Left colon (tissue), 2 donors: ENCODE measurements at regions of chr5 and their contacts with region 1.

Region 1: DNA sequence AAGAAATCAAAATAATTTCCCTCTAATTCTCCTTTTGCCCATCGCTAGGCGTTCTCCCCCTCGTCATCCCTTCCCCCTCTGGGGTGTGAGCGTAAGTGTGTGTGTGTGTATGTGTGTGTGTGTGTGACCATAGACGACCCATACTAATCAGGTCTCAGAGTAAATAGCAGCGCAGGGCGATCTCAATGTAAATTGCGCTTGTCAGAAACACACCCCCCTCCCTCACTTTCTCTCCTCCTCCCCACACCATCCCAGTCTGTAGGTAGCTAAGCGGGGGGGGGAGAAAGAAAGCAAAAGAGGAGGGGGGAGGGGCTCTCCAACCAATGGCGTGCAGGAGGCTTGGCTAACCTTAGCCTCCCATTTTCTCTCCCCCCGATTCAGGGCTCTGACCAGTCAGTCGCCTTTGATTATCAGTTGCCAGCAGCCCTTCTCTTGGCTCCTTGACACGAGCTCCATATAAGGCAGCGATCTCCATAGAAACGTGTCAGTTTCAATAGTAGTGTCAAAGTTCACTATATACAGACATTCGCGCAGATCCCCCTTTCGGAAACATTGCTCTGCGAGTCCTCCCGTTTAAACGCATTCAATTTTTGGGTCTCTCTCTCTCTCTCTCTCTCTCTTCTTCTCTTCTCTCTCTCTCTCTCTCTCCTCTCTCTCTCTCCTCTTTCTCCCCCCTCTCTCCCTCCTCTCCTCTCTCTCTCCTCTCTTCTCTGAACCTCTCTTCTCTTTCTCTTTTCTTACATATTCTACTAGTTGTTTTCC is at the start of gene NR2F1:
- DNase-seq: peak; percentile 47 to 54
- ATAC-seq: peak; percentile 39
- total RNA-seq, gene NR2F1: 2.7 to 4.9 TPM

Region 2: DNA sequence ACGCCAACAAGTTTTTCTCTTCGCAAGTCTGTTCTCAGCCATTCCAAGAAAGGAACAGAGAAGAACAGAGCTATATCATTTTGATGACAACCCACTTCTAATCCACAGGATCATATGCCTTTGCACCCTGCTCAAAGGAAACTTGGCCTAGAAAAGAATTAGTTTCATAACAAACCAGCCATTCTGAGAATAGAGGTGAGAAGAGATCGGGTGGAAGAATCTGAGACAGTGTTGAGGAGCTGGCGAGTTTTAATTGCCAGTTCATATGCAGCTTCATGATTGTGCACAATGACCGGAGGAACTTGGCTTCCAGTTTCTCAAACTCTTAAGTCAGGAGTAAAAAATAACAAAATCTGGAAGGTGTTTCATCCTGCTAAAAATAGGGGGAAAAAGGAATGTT is 381.8 kb before region 1 on chr5:
- intact Hi-C with region 1: no loop called
- DNase-seq: no peak
- ATAC-seq: no peak

Region 3: GRCh38 chr5:93512799-93513198 is 70.1 kb before region 1 on chr5:
- intact Hi-C with region 1: no loop called
- DNase-seq: no peak
- ATAC-seq: no peak

Region 4: GRCh38 chr5:93635991-93636390 is 53.1 kb after region 1 on chr5:
- intact Hi-C with region 1: no loop called
- DNase-seq: no peak
- ATAC-seq: no peak

Region 5: GRCh38 chr5:93915142-93915553 is 332.3 kb after region 1 on chr5:
- intact Hi-C with region 1: loop called in 1 of 2 experiments (anchors 10 kb)
- DNase-seq: no peak
- ATAC-seq: peak; percentile 48